Activated naive CD4-positive, alpha-beta T cell treated with anti-CD3 and anti-CD28 coated beads for 36 hours (primary cell): ENCODE measurements at regions of chr2 and their contacts with region 1.

Region 1: GRCh38 chr2:131521961-131522794 is 5.5 kb upstream of the CCDC74A start:
- DNase-seq: no peak
- H3K4me3 Mint-ChIP-seq: no peak overlapping the region
- H3K27ac Mint-ChIP-seq: no peak overlapping the region
- H3K4me1 Mint-ChIP-seq: no peaks in the 10 kb centered on the region
- H3K27me3 Mint-ChIP-seq: no peaks in the 10 kb centered on the region

Region 2: GRCh38 chr2:131682122-131682944 is 160.2 kb after region 1 on chr2:
- CTCF ChIA-PET with region 1: interaction called, 3 read pairs
- intact Hi-C with region 1: loop called (anchors 5 kb)
- DNase-seq: peak; percentile 82
- H3K4me3 Mint-ChIP-seq: peak overlapping the region; percentile 81
- H3K27ac Mint-ChIP-seq: peak overlapping the region; percentile 70
- H3K4me1 Mint-ChIP-seq: peaks cover 33% of the 10 kb centered on the region
- H3K27me3 Mint-ChIP-seq: no peaks in the 10 kb centered on the region